ENCODE measurements at regions of chr9 and their contacts with region 1.

Region 1: GRCh38 chr9:6008169-6008979 is 7.0 kb downstream of the RANBP6 start:
- DNase-seq: peak; percentile 96
- ATAC-seq: peak; percentile 77
- H3K4me3 Mint-ChIP-seq: peak overlapping the region; percentile 88
- H3K27ac Mint-ChIP-seq: peak overlapping the region; percentile 84
- H3K4me1 Mint-ChIP-seq: peaks cover 61% of the 10 kb centered on the region
- H3K27me3 Mint-ChIP-seq: no peaks in the 10 kb centered on the region

Region 2: GRCh38 chr9:4792572-4793458 is 1215.6 kb before region 1 on chr9 and contains the start of gene RCL1:
- CTCF ChIA-PET with region 1: no interaction called
- POLR2A ChIA-PET with region 1: no interaction called
- intact Hi-C with region 1: loop called in 1 of 2 experiments (anchors 5 kb)
- DNase-seq: peak; percentile 98
- ATAC-seq: peak; percentile 96
- H3K4me3 Mint-ChIP-seq: peak within 1 kb of the TSS; percentile 97
- H3K27ac Mint-ChIP-seq: peak within 1 kb of the TSS; percentile 89
- H3K4me1 Mint-ChIP-seq: peaks cover 44% of the 10 kb centered on the region
- H3K27me3 Mint-ChIP-seq: no peaks in the 10 kb centered on the region
- total RNA-seq, gene RCL1: 27.0 to 36.4 TPM

Region 3: DNA sequence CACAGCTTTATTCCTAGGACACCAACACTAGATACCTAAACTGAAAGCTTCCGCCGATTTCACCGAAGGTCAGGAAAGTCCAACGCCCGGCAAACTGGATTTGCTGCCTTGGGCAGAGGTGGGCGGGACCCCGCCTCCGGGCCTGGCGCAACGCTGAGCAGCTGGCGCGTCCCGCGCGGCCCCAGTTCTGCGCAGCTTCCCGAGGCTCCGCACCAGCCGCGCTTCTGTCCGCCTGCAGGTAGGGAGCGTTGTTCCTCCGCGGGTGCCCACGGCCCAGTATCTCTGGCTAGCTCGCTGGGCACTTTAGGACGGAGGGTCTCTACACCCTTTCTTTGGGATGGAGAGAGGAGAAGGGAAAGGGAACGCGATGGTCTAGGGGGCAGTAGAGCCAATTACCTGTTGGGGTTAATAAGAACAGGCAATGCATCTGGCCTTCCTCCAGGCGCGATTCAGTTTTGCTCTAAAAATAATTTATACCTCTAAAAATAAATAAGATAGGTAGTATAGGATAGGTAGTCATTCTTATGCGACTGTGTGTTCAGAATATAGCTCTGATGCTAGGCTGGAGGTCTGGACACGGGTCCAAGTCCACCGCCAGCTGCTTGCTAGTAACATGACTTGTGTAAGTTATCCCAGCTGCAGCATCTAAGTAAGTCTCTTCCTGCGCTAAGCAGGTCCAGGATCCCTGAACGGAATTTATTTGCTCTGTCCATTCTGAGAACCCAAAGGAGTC is 557.8 kb before region 1 on chr9 and contains the start of gene CD274:
- CTCF ChIA-PET with region 1: no interaction called
- POLR2A ChIA-PET with region 1: no interaction called
- intact Hi-C with region 1: loop called in 1 of 2 experiments (anchors 5 kb)
- DNase-seq: peak; percentile 94
- ATAC-seq: peak; percentile 66
- H3K4me3 Mint-ChIP-seq: peak within 1 kb of the TSS; percentile 98
- H3K27ac Mint-ChIP-seq: peak within 1 kb of the TSS; percentile 90
- H3K4me1 Mint-ChIP-seq: peaks cover 77% of the 10 kb centered on the region
- H3K27me3 Mint-ChIP-seq: no peaks in the 10 kb centered on the region
- total RNA-seq, gene CD274: 25.0 to 30.1 TPM

Region 4: GRCh38 chr9:5851445-5851844 is 156.9 kb before region 1 on chr9:
- CTCF ChIA-PET with region 1: interaction called, 3 read pairs
- POLR2A ChIA-PET with region 1: no interaction called
- intact Hi-C with region 1: loop called in 1 of 2 experiments (anchors 5 kb)
- DNase-seq: peak; percentile 65
- ATAC-seq: peak; percentile 87
- H3K4me3 Mint-ChIP-seq: no peak overlapping the region
- H3K27ac Mint-ChIP-seq: peak overlapping the region; percentile 44
- H3K4me1 Mint-ChIP-seq: peaks cover 42% of the 10 kb centered on the region
- H3K27me3 Mint-ChIP-seq: no peaks in the 10 kb centered on the region

Region 5: DNA sequence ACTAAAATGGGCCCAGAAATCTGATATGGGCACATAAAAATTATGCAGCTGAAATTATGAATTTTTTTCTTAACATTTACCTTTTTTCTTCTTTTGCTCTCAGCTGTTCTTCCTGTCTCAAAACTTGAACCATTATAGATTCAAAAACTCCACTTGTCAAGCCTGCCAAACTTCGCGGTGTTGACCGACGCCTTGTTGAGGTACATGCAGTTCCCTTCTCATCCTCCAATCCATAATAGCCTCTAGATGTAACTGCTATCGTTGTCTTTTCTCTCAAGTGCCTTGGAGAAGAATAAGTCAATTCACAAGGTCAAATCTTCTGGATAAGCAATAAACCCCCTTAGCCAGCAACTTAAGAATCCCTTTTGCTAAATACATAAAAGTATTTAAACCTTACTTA is 20.1 kb before region 1 on chr9:
- CTCF ChIA-PET with region 1: interaction called, 3 read pairs
- POLR2A ChIA-PET with region 1: no interaction called
- intact Hi-C with region 1: loop called in 1 of 2 experiments (anchors 1 kb)
- DNase-seq: no peak
- ATAC-seq: no peak
- H3K4me3 Mint-ChIP-seq: no peak overlapping the region
- H3K27ac Mint-ChIP-seq: no peak overlapping the region
- H3K4me1 Mint-ChIP-seq: peaks cover 21% of the 10 kb centered on the region
- H3K27me3 Mint-ChIP-seq: no peaks in the 10 kb centered on the region

Region 6: DNA sequence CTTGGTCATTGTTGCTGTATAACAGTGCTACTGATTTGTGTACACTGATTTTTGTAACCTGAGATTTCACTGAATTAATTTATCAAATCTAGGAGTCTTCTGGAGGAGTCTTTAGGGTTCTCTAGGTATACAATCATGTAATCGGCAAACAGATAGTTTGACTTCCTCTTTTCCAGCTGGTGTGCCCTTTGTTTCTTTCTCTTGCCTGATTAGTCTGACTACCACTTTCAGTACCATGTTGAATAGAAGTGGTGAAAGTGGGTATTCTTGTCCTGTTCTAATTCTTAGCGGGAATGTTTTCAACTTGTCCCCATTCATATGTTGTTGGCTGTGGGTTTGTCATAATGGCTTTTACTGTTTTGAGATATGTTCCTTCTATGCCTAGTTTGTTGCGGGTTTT is 31.7 kb after region 1 on chr9:
- CTCF ChIA-PET with region 1: no interaction called
- POLR2A ChIA-PET with region 1: no interaction called
- intact Hi-C with region 1: no loop called
- DNase-seq: no peak
- ATAC-seq: no peak
- H3K4me3 Mint-ChIP-seq: no peak overlapping the region
- H3K27ac Mint-ChIP-seq: no peak overlapping the region
- H3K4me1 Mint-ChIP-seq: no peaks in the 10 kb centered on the region
- H3K27me3 Mint-ChIP-seq: peaks cover 6% of the 10 kb centered on the region

Region 7: GRCh38 chr9:6109986-6110385 is 101.6 kb after region 1 on chr9:
- CTCF ChIA-PET with region 1: no interaction called
- POLR2A ChIA-PET with region 1: no interaction called
- intact Hi-C with region 1: no loop called
- DNase-seq: no peak
- ATAC-seq: no peak
- H3K4me3 Mint-ChIP-seq: no peak overlapping the region
- H3K27ac Mint-ChIP-seq: no peak overlapping the region
- H3K4me1 Mint-ChIP-seq: peaks cover 18% of the 10 kb centered on the region
- H3K27me3 Mint-ChIP-seq: no peaks in the 10 kb centered on the region

Region 8: GRCh38 chr9:6703898-6704639 is 695.7 kb after region 1 on chr9:
- CTCF ChIA-PET with region 1: no interaction called
- POLR2A ChIA-PET with region 1: no interaction called
- intact Hi-C with region 1: loop called in 1 of 2 experiments (anchors 5 kb)
- DNase-seq: peak; percentile 93
- ATAC-seq: peak; percentile 88
- H3K4me3 Mint-ChIP-seq: peak overlapping the region; percentile 75
- H3K27ac Mint-ChIP-seq: peak overlapping the region; percentile 77
- H3K4me1 Mint-ChIP-seq: peaks cover 14% of the 10 kb centered on the region
- H3K27me3 Mint-ChIP-seq: no peaks in the 10 kb centered on the region

Measured in activated CD4-positive, alpha-beta T cell treated with anti-CD3 and anti-CD28 coated beads for 36 hours (primary cell).